ENCODE measurements at regions of chr22 and their contacts with region 1.

Region 1: GRCh38 chr22:41508770-41509170 is 35.5 kb downstream of the POLR3H start:
- DNase-seq: peak; percentile 71
- ATAC-seq: peak; percentile 43

Region 2: DNA sequence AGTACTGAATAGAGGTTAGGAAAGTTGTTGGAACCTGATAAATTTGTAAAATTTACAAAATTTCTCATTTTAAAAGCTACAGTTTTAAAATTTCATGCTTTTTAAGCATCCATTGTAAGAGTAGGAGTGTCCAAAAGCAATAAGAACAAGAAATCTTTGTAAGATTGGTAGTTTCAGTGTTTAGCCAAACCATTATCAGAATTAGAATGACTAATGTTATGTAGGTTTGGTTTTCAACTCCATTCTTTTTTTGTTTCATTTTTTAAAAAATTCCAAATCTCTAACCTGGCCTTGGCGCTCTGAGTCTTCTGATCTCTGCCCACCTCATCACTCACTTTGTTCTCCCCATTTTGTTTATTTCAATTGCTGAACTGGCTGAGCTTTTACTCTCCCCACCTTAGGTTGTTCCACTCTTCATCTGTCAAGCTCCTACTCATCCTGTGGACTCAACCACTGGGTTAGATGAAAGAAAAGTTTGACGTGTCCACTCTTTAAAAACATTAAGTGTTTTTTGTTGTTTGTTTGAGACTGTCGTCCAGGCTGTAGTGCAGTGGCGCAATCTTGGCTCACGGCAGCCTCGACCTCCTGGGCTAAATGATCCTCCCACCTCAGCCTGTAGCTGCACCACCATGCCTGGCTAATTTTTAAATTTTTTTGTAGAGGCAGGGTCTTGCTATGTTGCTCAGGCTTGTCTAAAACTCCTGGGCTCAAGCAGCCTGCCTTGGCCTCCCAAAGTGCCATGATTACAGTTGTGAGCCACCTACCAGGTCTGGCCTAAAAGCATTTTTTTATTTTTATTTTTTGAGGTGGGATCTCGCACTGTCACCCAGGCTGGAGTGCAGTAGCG is 402.4 kb before region 1 on chr22:
- intact Hi-C with region 1: no loop called
- DNase-seq: no peak
- ATAC-seq: peak; percentile 37

Region 3: GRCh38 chr22:41288245-41288946 is 220.4 kb before region 1 on chr22:
- intact Hi-C with region 1: no loop called
- DNase-seq: no peak
- ATAC-seq: no peak

Region 4: DNA sequence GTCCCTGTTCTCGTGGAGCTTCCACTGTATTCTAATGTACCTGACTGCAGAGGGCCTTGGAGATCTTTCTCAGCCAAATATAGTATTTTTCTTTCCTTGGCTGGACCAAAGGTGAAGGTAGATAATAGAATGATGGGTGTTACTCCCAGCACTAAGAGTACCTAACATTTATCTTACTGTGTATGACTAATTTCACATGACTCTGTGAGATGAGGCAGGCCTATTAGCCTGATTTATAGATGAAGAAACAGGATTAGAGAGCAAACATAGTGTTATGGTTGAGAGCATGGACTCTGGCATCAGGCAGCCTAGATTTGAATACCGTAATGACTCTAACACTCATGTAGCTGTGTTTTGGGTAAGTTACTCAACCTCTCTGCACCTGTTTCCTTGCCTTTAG is 37.2 kb before region 1 on chr22:
- intact Hi-C with region 1: loop called (anchors 5 kb)
- DNase-seq: no peak
- ATAC-seq: no peak